Activated CD8-positive, alpha-beta T cell treated with anti-CD3 and anti-CD28 coated beads for 36 hours (primary cell): ENCODE measurements at regions of chr14 and their contacts with region 1.

Region 1: GRCh38 chr14:58501214-58501816 is 73.8 kb downstream of the KIAA0586 start:
- DNase-seq: peak; percentile 32
- ATAC-seq: peak; percentile 83
- H3K4me3 Mint-ChIP-seq: no peak overlapping the region
- H3K27ac Mint-ChIP-seq: no peak overlapping the region
- H3K4me1 Mint-ChIP-seq: no peaks in the 10 kb centered on the region
- H3K27me3 Mint-ChIP-seq: no peaks in the 10 kb centered on the region
- CTCF ChIP-seq: peak; percentile 90

Region 2: DNA sequence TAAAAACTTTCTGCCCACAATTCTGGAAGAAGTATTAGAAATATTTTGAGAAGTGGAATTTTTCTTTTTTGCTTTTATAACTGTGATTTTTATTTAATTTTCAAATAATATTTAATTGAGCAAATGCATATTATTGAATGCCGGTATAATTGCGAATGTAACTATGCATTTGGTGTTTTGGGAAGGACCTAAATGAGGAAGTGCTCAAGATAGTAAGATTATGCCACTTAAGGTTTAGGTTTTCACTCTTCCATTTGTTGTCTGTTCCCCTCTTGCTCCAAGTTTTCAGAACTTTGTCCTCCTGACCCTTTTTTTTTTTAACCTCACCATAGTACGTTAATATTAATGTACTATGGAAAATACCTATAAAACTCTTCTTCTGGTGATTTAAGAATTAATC is 12.0 kb after region 1 on chr14:
- CTCF ChIA-PET with region 1: interaction called, 12 read pairs
- POLR2A ChIA-PET with region 1: no interaction called
- intact Hi-C with region 1: no loop called
- DNase-seq: no peak
- ATAC-seq: no peak
- H3K4me3 Mint-ChIP-seq: no peak overlapping the region
- H3K27ac Mint-ChIP-seq: no peak overlapping the region
- H3K4me1 Mint-ChIP-seq: no peaks in the 10 kb centered on the region
- H3K27me3 Mint-ChIP-seq: no peaks in the 10 kb centered on the region
- CTCF ChIP-seq: no peak

Region 3: GRCh38 chr14:58574623-58575022 is 73.3 kb after region 1 on chr14:
- CTCF ChIA-PET with region 1: interaction called, 17 read pairs
- POLR2A ChIA-PET with region 1: no interaction called
- intact Hi-C with region 1: no loop called
- DNase-seq: no peak
- ATAC-seq: no peak
- H3K4me3 Mint-ChIP-seq: no peak overlapping the region
- H3K27ac Mint-ChIP-seq: no peak overlapping the region
- H3K4me1 Mint-ChIP-seq: peaks cover 26% of the 10 kb centered on the region
- H3K27me3 Mint-ChIP-seq: no peaks in the 10 kb centered on the region
- CTCF ChIP-seq: no peak

Region 4: DNA sequence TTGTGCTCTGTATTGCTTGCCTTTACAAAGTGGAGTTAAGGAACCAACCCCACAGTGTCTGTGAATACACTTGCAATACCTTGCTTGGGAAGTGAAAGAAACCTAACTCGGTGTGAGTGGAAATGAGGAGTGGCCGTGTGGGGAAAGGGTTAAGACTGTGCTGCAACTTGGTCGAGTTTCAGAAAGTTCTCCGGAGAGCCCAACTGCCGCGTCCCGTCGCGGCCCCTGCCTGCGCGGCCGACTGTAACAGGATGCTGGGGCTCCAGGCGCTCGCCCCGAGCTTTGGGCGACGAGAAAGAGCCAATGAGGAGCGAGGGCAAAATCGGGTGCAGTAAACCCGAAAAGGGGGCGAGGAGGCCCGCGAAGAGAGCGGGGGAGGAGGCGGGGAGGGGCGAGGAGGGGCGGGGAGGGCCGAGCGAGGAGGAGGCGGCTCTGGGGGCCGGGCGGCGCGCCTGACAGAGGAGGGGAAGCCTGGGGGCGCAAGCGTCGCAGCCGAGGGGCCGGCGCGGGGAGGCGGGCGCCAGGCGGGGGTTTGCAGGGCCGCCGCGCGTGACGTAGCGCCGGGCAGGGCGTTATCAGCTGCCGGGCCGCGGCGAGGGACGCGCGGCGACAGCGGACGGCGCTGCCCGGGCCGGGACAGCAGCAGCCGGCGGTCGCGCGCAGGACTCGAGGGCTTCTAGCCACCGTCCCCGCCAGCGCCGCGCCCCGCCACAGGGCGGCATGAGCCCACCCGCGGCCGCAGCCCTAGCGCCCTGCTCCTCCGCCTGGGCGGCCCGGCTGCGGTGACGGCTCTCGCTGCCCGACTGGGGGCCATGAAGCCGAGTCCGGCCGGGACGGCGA is 136.3 kb after region 1 on chr14 and contains the start of gene DACT1:
- CTCF ChIA-PET with region 1: interaction called, 33 read pairs
- POLR2A ChIA-PET with region 1: no interaction called
- intact Hi-C with region 1: loop called (anchors 5 kb)
- DNase-seq: peak; percentile 69
- ATAC-seq: peak; percentile 74
- H3K4me3 Mint-ChIP-seq: peak within 1 kb of the TSS; percentile 80
- H3K27ac Mint-ChIP-seq: peak within 1 kb of the TSS; percentile 84
- H3K4me1 Mint-ChIP-seq: peaks cover 34% of the 10 kb centered on the region
- H3K27me3 Mint-ChIP-seq: peaks cover 42% of the 10 kb centered on the region
- CTCF ChIP-seq: no peak
- total RNA-seq, gene DACT1: 1.4 to 2.0 TPM

Region 5: DNA sequence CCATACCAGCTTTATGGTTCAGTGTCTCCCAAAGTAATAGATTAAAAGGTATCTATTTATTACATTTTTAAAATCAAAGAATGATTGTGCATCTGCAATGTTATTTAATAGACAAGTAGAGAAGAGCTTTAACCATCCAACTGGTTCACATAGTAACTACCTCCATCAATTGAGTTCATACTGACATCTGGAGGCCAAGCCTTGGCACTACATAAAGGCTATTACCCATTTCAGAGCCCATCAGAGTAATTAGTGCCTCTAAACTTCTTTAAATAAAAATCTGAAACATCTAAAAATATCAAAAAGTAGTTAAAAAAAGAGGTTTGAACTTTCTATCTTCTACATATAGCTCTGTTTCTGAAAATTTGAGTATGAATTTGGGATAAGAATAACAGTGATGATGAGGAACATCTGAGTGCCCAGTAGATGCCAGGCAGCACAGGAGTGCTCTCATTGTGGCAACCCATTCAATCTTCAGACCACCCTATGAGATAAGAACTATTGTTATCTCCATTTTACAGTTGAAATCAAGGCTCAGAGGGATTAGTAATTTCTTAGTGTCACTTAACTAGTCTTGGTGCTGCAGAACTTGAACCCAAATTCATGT is 554.2 kb after region 1 on chr14:
- CTCF ChIA-PET with region 1: interaction called, 13 read pairs
- POLR2A ChIA-PET with region 1: no interaction called
- intact Hi-C with region 1: loop called (anchors 10 kb)
- DNase-seq: peak; percentile 42
- ATAC-seq: peak; percentile 65
- H3K4me3 Mint-ChIP-seq: no peak overlapping the region
- H3K27ac Mint-ChIP-seq: no peak overlapping the region
- H3K4me1 Mint-ChIP-seq: no peaks in the 10 kb centered on the region
- H3K27me3 Mint-ChIP-seq: peaks cover 7% of the 10 kb centered on the region
- CTCF ChIP-seq: peak; percentile 70